Right lobe of liver (tissue), 6 donors: ENCODE measurements at regions of chr5 and their contacts with region 1.

Region 1: GRCh38 chr5:39948867-39949468 is 524.2 kb upstream of the DAB2 start:
- DNase-seq: peak in 1 of 3 donors; percentile 58
- ATAC-seq: peak; percentile 86 to 92 (median 88)
- H3K4me3 ChIP-seq: no peak overlapping the region
- H3K27ac ChIP-seq: no peak overlapping the region
- H3K4me1 ChIP-seq: no peaks in the 10 kb centered on the region
- H3K27me3 ChIP-seq: no peaks in the 10 kb centered on the region
- CTCF ChIP-seq: peak; percentile 69 to 81 (median 77)
- POLR2A ChIP-seq: no peak

Region 2: GRCh38 chr5:39760385-39761198 is 188.4 kb before region 1 on chr5:
- intact Hi-C with region 1: no loop called
- DNase-seq: no peak
- ATAC-seq: no peak
- H3K4me3 ChIP-seq: no peak overlapping the region
- H3K27ac ChIP-seq: no peak overlapping the region
- H3K4me1 ChIP-seq: no peaks in the 10 kb centered on the region
- H3K27me3 ChIP-seq: no peaks in the 10 kb centered on the region
- CTCF ChIP-seq: no peak
- POLR2A ChIP-seq: no peak

Region 3: GRCh38 chr5:40688127-40688761 is 739.3 kb after region 1 on chr5:
- intact Hi-C with region 1: loop called (anchors 10 kb)
- DNase-seq: peak; percentile 69 to 80 (median 69)
- ATAC-seq: peak; percentile 97 to 99 (median 98)
- H3K4me3 ChIP-seq: no peak overlapping the region
- H3K27ac ChIP-seq: no peak overlapping the region
- H3K4me1 ChIP-seq: no peaks in the 10 kb centered on the region
- H3K27me3 ChIP-seq: no peaks in the 10 kb centered on the region
- CTCF ChIP-seq: peak; percentile 78 to 95 (median 88)
- POLR2A ChIP-seq: no peak